ENCODE measurements at regions of chr3 and their contacts with region 1.

Region 1: DNA sequence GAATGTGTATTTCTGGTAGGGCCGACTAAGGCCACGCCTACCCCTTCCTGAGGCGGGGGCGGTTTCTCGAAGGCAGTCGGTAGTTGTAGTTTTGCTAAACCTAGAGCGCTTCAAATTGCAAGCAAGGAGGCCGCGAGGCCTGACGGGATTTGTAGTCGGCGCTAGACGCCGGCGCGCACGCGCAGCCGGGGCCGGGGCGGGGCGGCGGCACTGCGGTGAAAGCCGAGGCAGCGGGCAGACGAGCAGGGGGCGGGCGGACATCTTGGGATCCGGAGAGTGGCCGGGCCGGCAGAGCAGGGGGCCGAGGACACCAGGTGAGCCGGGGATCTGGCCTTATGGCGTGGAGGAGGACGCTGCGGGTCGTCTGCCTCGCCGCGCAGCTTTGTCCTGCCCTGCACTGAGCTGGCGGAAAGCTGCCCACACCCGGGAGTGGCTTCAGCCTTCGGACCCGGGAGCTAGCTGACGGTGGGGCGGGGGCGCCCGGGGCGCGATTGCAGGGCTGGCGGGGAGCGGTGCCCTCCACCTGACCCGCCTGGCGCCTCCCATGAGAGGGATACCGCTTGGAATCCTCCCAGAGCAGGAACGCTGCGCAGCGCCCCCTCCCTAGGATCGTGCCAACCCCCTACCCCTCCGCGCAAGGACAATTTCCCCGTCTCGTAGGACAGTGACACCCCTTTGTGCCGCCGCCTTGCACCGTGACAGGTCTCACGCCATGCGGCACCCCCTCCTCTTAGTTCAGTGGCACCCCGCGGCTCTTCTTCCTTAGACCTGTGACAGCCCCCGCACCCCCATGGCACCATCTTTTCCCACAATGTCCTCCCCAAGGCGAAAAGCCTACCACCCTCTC is at the start of gene AP2M1:
- DNase-seq: peak; percentile 100
- ATAC-seq: peak; percentile 73
- H3K4me3 ChIP-seq: peak within 1 kb of the TSS; percentile 86
- H3K27ac ChIP-seq: peak within 1 kb of the TSS; percentile 96
- H3K4me1 ChIP-seq: peaks cover 19% of the 10 kb centered on the region
- H3K27me3 ChIP-seq: no peaks in the 10 kb centered on the region
- CTCF ChIP-seq: no peak
- POLR2A ChIP-seq: peak; percentile 65; the same call in 1 of the 2 replicates
- RAD21 ChIP-seq: no peak
- total RNA-seq, gene AP2M1: 855 and 876 TPM in 2 replicates

Region 2: DNA sequence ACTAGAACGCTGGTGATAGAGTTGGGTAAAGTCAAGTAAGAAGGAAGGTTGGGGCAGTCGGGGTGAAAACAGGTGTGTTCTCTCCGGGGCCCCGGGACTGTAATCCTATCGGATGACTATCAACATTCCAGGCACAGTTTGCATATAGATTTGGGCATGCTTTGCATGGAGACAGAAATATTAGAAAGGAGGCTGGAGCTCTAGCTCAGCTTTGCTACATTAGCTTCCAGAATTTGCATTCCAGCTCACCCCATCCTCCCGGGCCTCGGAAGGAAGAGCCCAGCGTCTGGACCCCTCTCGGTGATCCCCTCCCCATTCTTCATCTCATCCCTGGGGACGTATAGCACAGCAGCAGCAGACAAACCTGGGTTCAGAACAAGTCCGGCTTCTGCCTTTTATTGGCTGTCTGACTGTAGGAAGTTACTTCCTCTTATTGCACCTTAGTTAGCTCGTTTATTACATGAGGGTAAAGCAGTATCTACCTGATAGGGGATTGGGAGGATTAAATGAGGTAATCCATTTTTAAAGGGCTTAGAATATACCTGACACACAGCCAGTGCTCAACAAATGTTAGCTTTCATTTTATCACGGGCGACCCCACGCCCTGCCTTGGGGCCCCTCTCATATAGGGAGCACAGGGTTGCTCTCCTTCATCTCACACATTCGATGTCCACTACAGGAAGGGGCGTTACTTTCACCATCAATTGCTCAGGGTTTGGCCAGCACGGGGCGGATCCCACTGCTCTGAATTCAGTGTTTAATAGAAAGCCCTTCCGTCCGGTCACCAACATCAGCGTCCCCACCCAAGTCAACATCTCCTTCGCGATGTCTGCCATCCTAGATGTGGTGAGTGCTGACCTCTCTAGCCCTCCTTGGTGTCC is 74.8 kb before region 1 on chr3:
- CTCF ChIA-PET with region 1: no interaction called
- POLR2A ChIA-PET with region 1: interaction called, 14 read pairs
- dilution Hi-C with region 1: no loop called
- in situ Hi-C with region 1: no loop called
- intact Hi-C with region 1: no loop called
- DNase-seq: no peak
- ATAC-seq: no peak
- H3K4me3 ChIP-seq: no peak overlapping the region
- H3K27ac ChIP-seq: no peak overlapping the region
- H3K4me1 ChIP-seq: peaks cover 1% of the 10 kb centered on the region; the same call in 1 of the 2 replicates
- H3K27me3 ChIP-seq: peaks cover 8% of the 10 kb centered on the region
- CTCF ChIP-seq: no peak
- POLR2A ChIP-seq: no peak
- RAD21 ChIP-seq: no peak

Region 3: GRCh38 chr3:184154885-184155643 is 19.8 kb before region 1 on chr3 and contains the start of gene DVL3:
- CTCF ChIA-PET with region 1: no interaction called
- POLR2A ChIA-PET with region 1: interaction called, 3 read pairs
- dilution Hi-C with region 1: no loop called
- in situ Hi-C with region 1: no loop called
- intact Hi-C with region 1: loop called (anchors 1 kb)
- DNase-seq: peak; percentile 52
- ATAC-seq: peak; percentile 85
- H3K4me3 ChIP-seq: peak within 1 kb of the TSS; percentile 99
- H3K27ac ChIP-seq: peak within 1 kb of the TSS; percentile 96
- H3K4me1 ChIP-seq: peaks cover 9% of the 10 kb centered on the region
- H3K27me3 ChIP-seq: no peaks in the 10 kb centered on the region
- CTCF ChIP-seq: no peak
- POLR2A ChIP-seq: peak; percentile 59
- RAD21 ChIP-seq: no peak
- total RNA-seq, gene DVL3: 23.3 and 24.2 TPM in 2 replicates

Region 4: GRCh38 chr3:184185461-184186308 is 10.8 kb after region 1 on chr3 and contains the start of gene ABCF3:
- CTCF ChIA-PET with region 1: no interaction called
- POLR2A ChIA-PET with region 1: interaction called, 11 read pairs
- dilution Hi-C with region 1: no loop called
- in situ Hi-C with region 1: no loop called
- intact Hi-C with region 1: loop called (anchors 1 kb)
- DNase-seq: peak; percentile 98
- ATAC-seq: peak; percentile 99
- H3K4me3 ChIP-seq: peak within 1 kb of the TSS; percentile 67
- H3K27ac ChIP-seq: peak within 1 kb of the TSS; percentile 73
- H3K4me1 ChIP-seq: peaks cover 3% of the 10 kb centered on the region; the same call in 1 of the 2 replicates
- H3K27me3 ChIP-seq: no peaks in the 10 kb centered on the region
- CTCF ChIP-seq: no peak
- POLR2A ChIP-seq: peak; percentile 60; the same call in 1 of the 2 replicates
- RAD21 ChIP-seq: no peak
- total RNA-seq, gene ABCF3: 35.0 and 36.9 TPM in 2 replicates

Measured in IMR-90 (cell line).